ENCODE measurements at regions of chr10 and their contacts with region 1.

Region 1: DNA sequence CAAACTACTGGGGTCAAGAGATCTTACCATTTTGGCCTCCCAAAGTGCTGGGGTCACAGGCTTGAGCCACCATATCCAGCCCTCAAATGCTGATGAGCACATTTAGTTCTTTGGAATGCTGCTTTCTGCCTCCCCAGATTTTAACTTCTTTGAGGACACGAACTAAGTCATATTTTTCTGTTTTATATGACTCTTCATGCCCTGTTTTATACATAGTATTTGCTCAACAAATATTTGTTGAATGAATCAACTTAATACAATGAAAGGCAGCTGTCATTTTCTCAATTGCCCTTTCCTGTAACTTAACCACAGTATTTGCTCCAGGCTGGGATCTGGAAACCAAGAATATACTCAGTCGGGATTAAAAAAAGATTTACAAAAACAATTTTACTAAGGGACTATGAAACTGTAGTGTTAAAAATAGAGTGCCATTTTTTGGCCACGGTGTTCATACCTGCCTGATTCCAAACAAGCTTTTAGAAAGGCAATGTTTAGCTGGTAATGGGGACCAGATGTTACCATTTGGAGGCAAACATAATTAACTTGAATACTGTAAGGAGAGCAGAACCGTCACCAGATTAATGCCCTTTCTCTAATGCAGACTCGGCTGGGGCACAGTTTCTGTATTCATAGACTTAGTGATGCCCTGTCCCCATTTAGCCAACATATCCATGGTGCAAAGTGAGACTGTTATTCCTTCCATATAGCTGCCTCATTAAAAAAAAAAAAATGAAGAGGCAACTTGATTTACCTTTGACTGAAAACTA is 117.6 kb downstream of the NRP1 start:
- DNase-seq: peak; percentile 40 to 62
- ATAC-seq: peak; percentile 76 to 81
- H3K4me3 ChIP-seq: no peak overlapping the region
- H3K27ac ChIP-seq: peak overlapping the region; percentile 66 to 82
- H3K4me1 ChIP-seq: peaks cover 60% of the 10 kb centered on the region
- CTCF ChIP-seq: no peak
- EP300 ChIP-seq: peak; percentile 82 to 85; a peak in 3 of 5 replicates
- POLR2A ChIP-seq: no peak
- RAD21 ChIP-seq: 0 out of 5 replicates have a peak, but pooled peaks of 1 of the 2 experiments have one; percentile 34

Region 2: DNA sequence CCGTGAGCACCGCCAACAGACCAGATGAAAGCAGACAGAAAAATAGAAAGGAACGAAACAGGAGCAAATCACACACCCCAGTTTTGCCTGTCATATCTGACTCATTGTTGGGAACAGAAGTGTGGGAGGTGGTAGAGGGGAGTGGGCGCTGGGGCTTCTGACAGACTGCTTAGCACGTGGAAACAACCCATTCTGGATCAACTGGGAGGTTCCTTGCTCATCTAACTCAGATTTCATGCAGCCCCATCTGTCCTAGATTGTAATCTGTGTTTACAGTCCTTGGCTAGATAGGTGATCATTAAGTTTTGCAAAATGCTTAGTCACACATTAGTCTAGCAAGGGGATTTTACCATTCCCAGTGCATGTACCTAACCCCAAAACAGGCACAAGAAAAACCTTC is 36.5 kb before region 1 on chr10:
- CTCF ChIA-PET with region 1: no interaction called
- POLR2A ChIA-PET with region 1: no interaction called
- DNase-seq: no peak
- ATAC-seq: no peak
- H3K4me3 ChIP-seq: no peak overlapping the region
- H3K27ac ChIP-seq: peak overlapping the region in 1 of 2 experiments; percentile 60; a peak in 3 of 6 replicates
- H3K4me1 ChIP-seq: peaks cover 50% of the 10 kb centered on the region
- CTCF ChIP-seq: no peak
- EP300 ChIP-seq: no peak
- POLR2A ChIP-seq: no peak
- RAD21 ChIP-seq: no peak

Region 3: GRCh38 chr10:33237736-33238624 is 21.1 kb after region 1 on chr10:
- CTCF ChIA-PET with region 1: interaction called, 13 read pairs
- POLR2A ChIA-PET with region 1: interaction called, 3 read pairs
- DNase-seq: peak; percentile 90 to 96
- ATAC-seq: peak; percentile 94 to 97
- H3K4me3 ChIP-seq: no peak overlapping the region
- H3K27ac ChIP-seq: peak overlapping the region; percentile 91 to 92
- H3K4me1 ChIP-seq: peaks cover 84% of the 10 kb centered on the region
- CTCF ChIP-seq: no peak
- EP300 ChIP-seq: peak; percentile 79 to 83; a peak in 3 of 5 replicates
- POLR2A ChIP-seq: no peak
- RAD21 ChIP-seq: peak; percentile 28 to 44; a peak in 4 of 5 replicates

Region 4: DNA sequence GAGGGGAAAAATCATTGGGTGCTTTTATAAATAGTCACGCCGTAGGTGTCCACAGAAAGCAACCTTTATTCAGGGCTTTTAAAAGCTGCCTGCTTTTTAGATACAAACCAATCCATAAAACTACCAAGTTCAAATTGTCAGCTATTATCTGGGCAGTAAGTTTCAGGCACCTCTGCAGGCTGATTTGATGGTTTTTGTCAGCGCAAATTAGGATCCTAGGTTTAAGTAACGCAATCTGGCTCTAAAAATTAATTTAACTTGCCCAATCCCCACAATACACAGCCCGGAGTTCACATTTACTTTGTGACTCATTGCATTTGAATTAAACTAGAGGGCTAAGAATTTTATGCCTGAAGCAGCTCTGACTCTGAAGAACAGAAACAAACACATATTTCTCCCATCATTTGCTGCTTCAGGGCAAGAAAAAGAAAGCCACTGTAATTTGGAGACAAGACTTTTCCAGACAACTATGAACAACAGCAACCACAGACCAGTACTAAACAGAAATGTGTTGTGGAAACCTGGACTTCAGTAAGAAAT is 74.3 kb after region 1 on chr10:
- CTCF ChIA-PET with region 1: no interaction called
- POLR2A ChIA-PET with region 1: no interaction called
- DNase-seq: peak; percentile 60 to 63
- ATAC-seq: peak; percentile 75 to 80; a peak in 5 of 6 replicates
- H3K4me3 ChIP-seq: peak overlapping the region; percentile 11; the same call in 2 of the 3 replicates
- H3K27ac ChIP-seq: peak overlapping the region; percentile 75 to 89
- H3K4me1 ChIP-seq: peaks cover 78% of the 10 kb centered on the region
- CTCF ChIP-seq: 0 out of 3 replicates have a peak, but pooled peaks have one; percentile 3
- EP300 ChIP-seq: peak in 1 of 2 experiments; percentile 56; a peak in 1 of 5 replicates
- POLR2A ChIP-seq: no peak
- RAD21 ChIP-seq: no peak; a peak in 1 of 5 replicates

Region 5: DNA sequence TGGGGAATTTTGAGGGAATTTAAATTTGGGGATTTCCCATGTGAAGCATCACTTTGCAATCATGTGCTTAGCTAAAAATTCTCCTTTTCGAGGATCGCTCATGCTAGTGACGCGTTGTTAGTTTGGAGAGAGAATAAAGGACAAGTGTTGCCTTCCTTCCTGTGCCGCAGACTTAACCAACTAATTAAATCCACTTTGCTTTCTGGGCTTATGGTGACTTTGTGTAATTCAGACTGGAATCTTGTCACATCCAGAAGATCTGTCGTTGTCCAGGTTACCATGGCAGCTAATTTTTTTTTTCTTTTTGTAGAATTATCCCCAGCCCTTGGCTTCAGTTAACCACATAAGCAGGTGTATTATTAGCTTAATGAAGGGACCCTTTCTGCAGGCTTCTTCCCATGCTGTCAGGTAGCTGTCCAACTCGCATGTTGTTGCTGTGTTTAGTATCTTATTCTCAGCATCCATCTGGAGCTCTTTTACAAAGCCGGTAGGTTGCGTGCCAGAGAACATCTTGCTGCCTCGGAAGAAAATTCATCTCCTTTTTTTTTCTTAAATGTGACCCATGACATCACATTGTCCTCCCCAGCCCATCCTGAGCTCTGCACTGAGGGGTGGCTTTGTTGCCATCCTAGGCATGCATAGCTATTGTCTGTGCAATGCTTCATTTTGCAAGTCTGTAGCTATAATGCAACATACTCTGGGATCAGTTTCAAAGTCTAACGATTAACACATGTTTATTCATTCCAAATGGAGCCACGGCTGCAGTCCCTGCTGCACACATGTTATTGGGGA is 164.8 kb after region 1 on chr10:
- CTCF ChIA-PET with region 1: no interaction called
- POLR2A ChIA-PET with region 1: no interaction called
- DNase-seq: no peak
- ATAC-seq: no peak
- H3K4me3 ChIP-seq: no peak overlapping the region
- H3K27ac ChIP-seq: no peak overlapping the region
- H3K4me1 ChIP-seq: peaks cover 18% of the 10 kb centered on the region
- CTCF ChIP-seq: no peak
- EP300 ChIP-seq: no peak
- POLR2A ChIP-seq: no peak
- RAD21 ChIP-seq: no peak